Activated T-helper 1 cell treated with anti-CD3 and anti-CD28 coated beads, Interleukin-12 subunit alpha, Interleukin-12 subunit beta, Interleukin-2, Interleukin-4 antibody, amounts not matched to agents 30 ng/mL and 10 ng/mL and 1 ng/mL, durations not matched to agents 14 hours and 24 hours and 36 hours (primary cell): ENCODE measurements at regions of chr4 and their contacts with region 1.

Region 1: DNA sequence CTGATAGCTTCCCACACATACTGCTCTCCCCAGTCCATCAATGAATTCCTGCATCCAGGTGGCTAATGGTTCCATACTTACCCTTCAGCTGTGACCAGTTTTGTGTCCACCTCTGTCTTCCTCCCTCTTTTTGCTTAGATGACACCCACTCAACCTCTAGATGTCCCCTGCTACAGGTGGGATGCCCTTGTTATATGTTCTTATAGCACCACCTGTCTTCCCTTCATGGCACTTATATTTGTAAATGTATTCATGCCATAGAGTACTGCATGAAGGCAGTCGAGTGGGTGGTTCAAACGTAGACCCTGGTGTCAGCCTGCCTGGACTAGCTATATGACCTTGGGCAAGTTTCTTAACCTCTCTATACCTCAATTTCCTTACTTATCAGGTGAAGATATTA is 6.5 kb upstream of the USP46 start:
- DNase-seq: no peak
- H3K4me3 Mint-ChIP-seq: no peak overlapping the region
- H3K27ac Mint-ChIP-seq: no peak overlapping the region
- H3K4me1 Mint-ChIP-seq: peaks cover 8% of the 10 kb centered on the region
- H3K27me3 Mint-ChIP-seq: peaks cover 21% of the 10 kb centered on the region

Region 2: DNA sequence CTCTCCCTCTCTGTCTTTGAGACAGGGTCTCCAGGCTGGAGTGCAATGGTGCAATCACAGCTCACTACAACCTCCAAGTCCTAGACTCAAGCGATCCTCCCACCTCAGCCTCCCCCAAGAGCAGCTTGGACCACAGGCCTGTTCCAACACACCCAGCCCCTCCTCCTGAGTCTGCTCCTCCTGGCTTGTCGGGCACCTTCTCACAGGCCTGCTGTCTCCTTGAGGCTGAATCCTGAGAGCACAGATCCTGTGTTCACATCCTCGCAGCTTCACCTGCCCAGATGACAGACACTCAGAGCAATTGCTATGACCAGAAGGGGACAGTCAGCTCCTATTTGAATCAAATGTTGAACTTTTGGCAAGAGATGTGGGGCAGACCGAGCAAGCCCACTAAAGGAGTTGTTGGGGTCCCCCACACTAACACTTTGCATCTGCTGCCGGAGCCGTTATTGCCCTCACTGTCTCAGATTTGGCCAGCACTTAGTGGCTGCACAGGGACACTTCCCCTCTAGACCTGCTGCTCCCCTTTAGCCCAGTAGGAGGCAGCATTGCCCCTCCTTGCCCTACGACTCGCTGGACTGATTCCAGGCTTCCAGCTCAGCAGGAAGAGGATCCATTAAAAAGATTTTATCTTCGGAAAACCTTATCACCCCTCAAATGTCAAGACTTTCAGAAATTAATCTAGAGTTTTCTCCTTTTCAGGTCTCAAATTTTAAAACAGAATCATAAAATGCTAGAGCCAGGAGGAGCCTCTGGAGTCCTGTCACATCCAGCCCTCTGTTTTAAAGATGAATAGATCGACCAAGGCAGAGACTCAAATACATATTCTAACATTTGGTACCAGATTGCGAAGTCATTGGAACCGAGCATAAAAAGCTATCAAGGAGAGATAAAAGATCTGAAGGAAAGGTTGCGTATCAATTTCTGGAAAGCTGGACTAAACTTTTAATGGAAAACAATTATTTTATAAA is 120.2 kb before region 1 on chr4:
- intact Hi-C with region 1: loop called (anchors 2 kb)
- DNase-seq: peak; percentile 22
- H3K4me3 Mint-ChIP-seq: no peak overlapping the region
- H3K27ac Mint-ChIP-seq: no peak overlapping the region
- H3K4me1 Mint-ChIP-seq: no peaks in the 10 kb centered on the region
- H3K27me3 Mint-ChIP-seq: no peaks in the 10 kb centered on the region

Region 3: DNA sequence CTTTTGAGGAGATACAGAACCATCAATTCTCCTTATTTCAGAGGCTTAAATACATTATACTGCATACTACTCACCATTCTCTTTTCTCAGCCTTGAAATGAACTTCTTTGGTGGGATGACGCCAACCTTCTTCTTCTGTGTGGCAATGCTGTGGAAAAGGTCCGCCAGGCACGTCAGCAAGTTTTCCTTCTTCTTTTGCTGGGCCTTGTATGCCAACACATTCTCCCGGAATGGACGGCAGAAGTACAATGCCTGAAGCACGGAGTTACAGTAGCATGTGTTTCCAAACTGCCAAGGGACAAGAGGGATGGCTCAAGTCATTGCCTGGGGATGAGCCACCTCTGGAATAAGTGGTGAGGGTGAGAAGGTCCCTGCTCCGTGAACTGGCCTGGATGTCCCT is 37.7 kb before region 1 on chr4:
- intact Hi-C with region 1: no loop called
- DNase-seq: no peak
- H3K4me3 Mint-ChIP-seq: no peak overlapping the region
- H3K27ac Mint-ChIP-seq: no peak overlapping the region
- H3K4me1 Mint-ChIP-seq: no peaks in the 10 kb centered on the region
- H3K27me3 Mint-ChIP-seq: no peaks in the 10 kb centered on the region